HepG2 (cell line): ENCODE measurements at regions of chr2 and their contacts with region 1.

Region 1: DNA sequence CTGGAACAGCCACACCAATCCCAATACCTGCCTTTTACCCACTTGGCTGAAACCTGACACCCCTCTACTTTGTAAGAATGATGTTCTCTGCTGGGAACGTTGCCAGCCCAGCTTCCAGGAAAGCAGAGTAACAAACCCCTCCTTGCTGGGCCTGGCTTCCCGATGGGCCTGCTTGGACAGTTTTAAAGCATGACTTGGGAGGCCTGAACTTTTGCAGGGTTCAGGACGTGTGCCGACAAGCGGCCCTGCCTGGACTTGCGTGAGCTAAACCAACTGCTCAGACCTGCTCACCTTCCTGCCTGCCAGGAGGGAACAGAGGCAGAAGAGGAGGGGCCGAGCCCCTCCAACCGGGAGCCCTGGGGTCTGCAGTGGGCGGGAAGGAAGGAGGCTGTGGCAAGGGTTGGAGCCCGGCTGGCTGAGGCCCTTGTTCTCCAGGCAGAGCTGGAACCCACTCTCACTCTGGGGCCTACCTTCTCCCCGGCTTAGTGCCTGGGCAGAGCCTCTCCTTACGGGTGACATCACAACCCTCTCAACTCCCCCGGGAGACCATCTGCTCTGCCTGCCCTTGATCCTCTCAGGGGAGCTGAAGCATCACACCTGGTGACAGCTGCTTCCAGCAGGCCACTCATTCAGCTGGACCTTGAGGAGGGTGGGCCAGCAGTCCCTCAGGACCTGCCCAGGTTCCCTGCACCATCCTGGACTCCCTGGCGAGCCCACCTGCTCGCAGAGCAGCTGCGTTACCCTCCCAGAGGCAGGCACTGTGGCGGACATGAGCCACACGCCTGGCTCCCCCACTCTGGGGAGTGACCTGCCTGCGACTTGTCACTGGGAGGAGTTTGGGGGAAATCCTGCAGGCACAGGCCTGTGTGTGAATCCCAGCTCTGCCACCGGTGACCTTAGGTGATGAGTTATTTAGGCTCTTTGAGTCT is 13.2 kb downstream of the HS6ST1 start:
- DNase-seq: peak; percentile 76
- ATAC-seq: no peak; the same call in 2 of the 3 replicates
- H3K4me3 ChIP-seq: peak overlapping the region in 1 of 3 experiments; percentile 45; a peak in 1 of 6 replicates
- H3K27ac ChIP-seq: peak overlapping the region; percentile 56
- H3K4me1 ChIP-seq: peaks cover 75% of the 10 kb centered on the region
- H3K27me3 ChIP-seq: no peaks in the 10 kb centered on the region
- CTCF ChIP-seq: no peak
- EP300 ChIP-seq: peak in 1 of 2 experiments; percentile 59; a peak in 1 of 4 replicates
- POLR2A ChIP-seq: no peak
- RAD21 ChIP-seq: no peak

Region 2: DNA sequence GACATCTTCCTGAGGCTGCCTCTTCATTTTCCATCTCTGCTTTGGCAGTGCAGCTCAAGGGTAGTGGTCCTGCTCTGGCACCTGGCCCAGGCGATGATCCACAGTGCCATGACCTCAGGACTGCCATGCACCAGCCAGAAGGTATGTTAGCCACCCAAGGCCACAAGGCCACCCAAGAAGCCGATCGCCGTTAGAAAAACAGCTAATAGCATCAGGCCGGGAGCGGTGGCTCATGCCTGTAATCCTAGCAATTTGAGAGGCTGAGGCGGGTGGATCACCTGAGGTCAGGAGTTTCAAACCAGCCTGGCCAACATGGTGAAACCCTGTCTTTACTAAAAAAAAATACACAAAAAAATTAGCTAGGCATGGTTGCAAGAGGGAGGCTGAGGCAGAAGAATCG is 242.9 kb before region 1 on chr2:
- CTCF ChIA-PET with region 1: no interaction called
- POLR2A ChIA-PET with region 1: no interaction called
- in situ Hi-C with region 1: loop called (anchors 5 kb)
- intact Hi-C with region 1: loop called (anchors 2 kb)
- DNase-seq: no peak
- ATAC-seq: no peak
- H3K4me3 ChIP-seq: no peak overlapping the region
- H3K27ac ChIP-seq: no peak overlapping the region
- H3K4me1 ChIP-seq: peaks cover 50% of the 10 kb centered on the region
- H3K27me3 ChIP-seq: no peaks in the 10 kb centered on the region; a peak in 1 of 5 replicates
- CTCF ChIP-seq: no peak
- EP300 ChIP-seq: no peak
- POLR2A ChIP-seq: no peak
- RAD21 ChIP-seq: no peak

Region 3: DNA sequence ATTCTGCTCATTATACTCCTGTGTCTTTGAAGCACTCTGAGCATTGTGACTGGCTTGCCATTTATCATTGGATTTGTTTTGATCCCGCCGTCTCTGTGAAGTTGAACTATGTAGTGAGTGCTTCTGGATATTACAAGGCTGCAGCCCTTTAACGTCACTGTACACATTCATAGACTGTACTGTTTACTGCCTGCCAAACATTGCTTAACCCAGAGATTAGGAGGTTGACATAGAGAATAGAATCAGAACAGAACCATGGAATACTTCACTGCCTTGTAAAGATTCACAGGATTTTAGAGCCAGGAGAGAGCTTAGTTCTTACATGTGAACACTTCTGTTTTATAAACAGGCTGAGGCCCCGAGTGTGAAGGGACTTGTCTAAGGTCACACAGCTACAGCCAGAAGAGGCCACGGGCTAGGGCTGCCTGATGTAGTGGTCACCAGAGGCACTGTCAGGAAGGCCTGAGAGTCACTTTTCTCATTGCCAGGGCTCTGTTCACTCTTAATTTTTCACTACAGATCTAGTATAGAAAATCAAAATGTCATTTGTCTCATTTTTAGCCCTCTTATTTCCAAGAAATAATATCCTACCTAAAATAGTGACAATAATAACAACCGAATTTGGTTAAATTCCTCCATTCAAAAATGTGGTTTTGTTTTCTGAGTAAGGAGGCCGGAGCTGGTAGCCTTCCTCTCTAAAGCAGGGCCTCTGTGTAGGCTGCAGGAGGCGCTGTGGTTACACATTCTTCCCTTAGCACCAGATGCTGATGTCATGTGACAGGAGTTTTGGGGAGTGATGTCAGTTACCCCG is 126.6 kb before region 1 on chr2:
- CTCF ChIA-PET with region 1: interaction called, 5 read pairs
- POLR2A ChIA-PET with region 1: interaction called, 7 read pairs
- in situ Hi-C with region 1: loop called (anchors 5 kb)
- intact Hi-C with region 1: loop called (anchors 1 kb)
- DNase-seq: peak; percentile 100
- ATAC-seq: peak; percentile 98
- H3K4me3 ChIP-seq: peak overlapping the region in 2 of 3 experiments; percentile 6 to 36; a peak in 2 of 6 replicates
- H3K27ac ChIP-seq: peak overlapping the region; percentile 93
- H3K4me1 ChIP-seq: peaks cover 50% of the 10 kb centered on the region
- H3K27me3 ChIP-seq: no peaks in the 10 kb centered on the region
- CTCF ChIP-seq: peak; percentile 91
- EP300 ChIP-seq: peak; percentile 93 to 99; a peak in 3 of 4 replicates
- POLR2A ChIP-seq: peak in 1 of 2 experiments; percentile 22; a peak in 1 of 4 replicates
- RAD21 ChIP-seq: peak; percentile 83

Region 4: DNA sequence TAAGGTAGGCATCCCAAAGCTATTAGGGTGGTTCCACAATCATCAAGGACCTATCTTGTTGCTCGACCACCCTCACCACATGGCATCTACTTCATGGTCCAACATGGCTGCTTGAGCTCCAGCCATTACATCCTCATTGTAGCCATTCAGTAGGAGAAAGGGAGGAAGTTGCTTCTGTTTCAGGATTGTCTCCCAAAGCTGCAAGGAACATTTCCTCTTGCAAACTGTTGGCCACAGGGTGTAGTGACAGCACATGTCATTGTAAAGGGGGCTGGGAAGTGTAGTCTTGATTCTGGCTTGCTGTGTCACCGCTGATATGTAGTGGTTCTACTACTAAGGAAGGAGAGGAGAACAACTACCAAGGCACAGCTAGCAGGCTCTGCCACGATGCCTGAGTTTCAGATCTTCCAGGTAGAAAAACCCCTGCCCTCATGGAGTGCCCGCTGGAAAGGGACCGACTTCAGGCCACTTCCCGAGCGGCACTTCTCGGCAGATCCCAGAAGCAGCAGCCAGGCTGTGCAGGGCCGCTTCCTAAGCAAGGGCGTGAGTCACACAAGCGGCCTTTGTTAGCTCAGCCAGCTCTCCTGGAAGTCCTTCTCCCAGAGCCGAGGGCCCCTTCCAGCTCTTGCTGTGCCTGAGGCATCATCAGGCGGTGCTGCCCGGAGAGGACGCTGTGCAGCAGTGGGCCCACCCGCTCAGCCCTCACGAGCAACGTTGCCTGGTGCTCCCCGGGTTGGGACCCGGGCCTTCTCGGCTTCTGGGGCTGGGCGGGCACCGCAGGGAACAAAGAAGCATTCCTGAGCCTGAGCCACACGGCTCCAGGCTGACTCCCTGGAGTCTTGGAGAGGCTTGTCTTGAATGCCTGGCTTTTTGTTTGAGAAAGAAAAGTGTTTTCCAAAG is 44.9 kb before region 1 on chr2:
- CTCF ChIA-PET with region 1: no interaction called
- POLR2A ChIA-PET with region 1: interaction called, 11 read pairs
- in situ Hi-C with region 1: no loop called
- intact Hi-C with region 1: loop called (anchors 5 kb)
- DNase-seq: peak; percentile 86
- ATAC-seq: peak; percentile 90
- H3K4me3 ChIP-seq: peak overlapping the region; percentile 35 to 61 (median 39); a peak in 5 of 6 replicates
- H3K27ac ChIP-seq: peak overlapping the region; percentile 18
- H3K4me1 ChIP-seq: peaks cover 39% of the 10 kb centered on the region
- H3K27me3 ChIP-seq: no peaks in the 10 kb centered on the region
- CTCF ChIP-seq: peak; percentile 57
- EP300 ChIP-seq: no peak
- POLR2A ChIP-seq: peak in 1 of 2 experiments; percentile 62; a peak in 2 of 4 replicates
- RAD21 ChIP-seq: peak; percentile 74

Region 5: DNA sequence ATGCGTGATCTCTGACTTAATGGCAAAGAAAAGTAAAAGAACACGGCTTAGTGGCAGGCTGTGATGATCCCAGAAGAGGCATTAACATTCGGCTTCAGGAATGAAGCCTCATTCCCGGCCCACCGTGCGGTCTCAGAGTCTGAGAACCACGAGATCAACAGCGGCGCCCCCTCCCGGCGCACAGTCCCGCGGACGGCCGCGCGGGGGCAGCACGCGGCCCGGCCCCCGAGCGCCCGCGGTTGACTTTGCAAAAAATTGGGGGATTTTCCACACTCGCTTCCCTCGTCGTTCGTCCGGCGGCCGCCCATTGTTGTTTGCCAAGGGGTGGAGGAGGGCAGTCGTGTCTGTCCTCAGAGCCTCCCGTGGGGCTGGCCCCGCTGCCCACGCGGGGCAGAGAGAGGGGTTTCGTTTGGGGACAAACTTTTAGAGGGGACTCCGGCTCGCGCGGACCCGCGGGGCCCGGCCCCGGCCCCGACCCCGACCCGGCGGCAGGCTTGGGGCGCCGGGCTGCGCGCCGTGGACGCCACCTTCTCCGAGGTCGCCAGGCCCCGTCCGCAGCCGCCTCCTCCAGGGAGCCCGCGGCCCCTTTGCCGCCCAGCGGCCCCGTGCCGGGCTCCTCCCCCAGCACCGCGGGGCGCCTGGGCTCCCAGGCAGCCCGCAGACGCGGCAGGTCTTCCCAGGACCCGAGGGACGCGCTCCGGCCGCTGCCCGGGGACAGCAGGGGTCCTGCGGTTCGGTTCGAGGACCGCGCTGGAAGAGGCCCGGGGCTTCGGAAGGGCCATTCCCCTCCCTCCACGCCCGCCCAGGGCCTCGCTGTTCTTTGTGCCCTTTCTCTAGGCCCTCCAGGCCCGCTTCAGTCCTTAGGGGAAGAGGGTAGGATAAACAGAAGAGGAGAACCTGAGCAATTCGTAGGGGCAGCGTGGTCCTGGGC is 16.6 kb after region 1 on chr2:
- CTCF ChIA-PET with region 1: interaction called, 4 read pairs
- POLR2A ChIA-PET with region 1: interaction called, 12 read pairs
- in situ Hi-C with region 1: no loop called
- intact Hi-C with region 1: loop called (anchors 1 kb)
- DNase-seq: peak; percentile 78
- ATAC-seq: peak; percentile 58
- H3K4me3 ChIP-seq: peak overlapping the region; percentile 54 to 84 (median 75)
- H3K27ac ChIP-seq: peak overlapping the region; percentile 63
- H3K4me1 ChIP-seq: peaks cover 62% of the 10 kb centered on the region
- H3K27me3 ChIP-seq: no peaks in the 10 kb centered on the region; a peak in 1 of 5 replicates
- CTCF ChIP-seq: peak; percentile 86
- EP300 ChIP-seq: peak; percentile 16 to 75; a peak in 2 of 4 replicates
- POLR2A ChIP-seq: peak in 1 of 2 experiments; percentile 77; a peak in 2 of 4 replicates
- RAD21 ChIP-seq: peak; percentile 95

Region 6: GRCh38 chr2:128425731-128426620 is 120.6 kb after region 1 on chr2:
- CTCF ChIA-PET with region 1: no interaction called
- POLR2A ChIA-PET with region 1: no interaction called
- in situ Hi-C with region 1: no loop called
- intact Hi-C with region 1: no loop called
- DNase-seq: no peak
- ATAC-seq: peak; percentile 28
- H3K4me3 ChIP-seq: no peak overlapping the region
- H3K27ac ChIP-seq: no peak overlapping the region
- H3K4me1 ChIP-seq: no peaks in the 10 kb centered on the region
- H3K27me3 ChIP-seq: peaks cover 2 to 21% of the 10 kb centered on the region in 2 experiments; a peak in 3 of 5 replicates
- CTCF ChIP-seq: no peak
- EP300 ChIP-seq: no peak
- POLR2A ChIP-seq: no peak
- RAD21 ChIP-seq: no peak